ENCODE measurements at regions of chr9 and their contacts with region 1.

Region 1: DNA sequence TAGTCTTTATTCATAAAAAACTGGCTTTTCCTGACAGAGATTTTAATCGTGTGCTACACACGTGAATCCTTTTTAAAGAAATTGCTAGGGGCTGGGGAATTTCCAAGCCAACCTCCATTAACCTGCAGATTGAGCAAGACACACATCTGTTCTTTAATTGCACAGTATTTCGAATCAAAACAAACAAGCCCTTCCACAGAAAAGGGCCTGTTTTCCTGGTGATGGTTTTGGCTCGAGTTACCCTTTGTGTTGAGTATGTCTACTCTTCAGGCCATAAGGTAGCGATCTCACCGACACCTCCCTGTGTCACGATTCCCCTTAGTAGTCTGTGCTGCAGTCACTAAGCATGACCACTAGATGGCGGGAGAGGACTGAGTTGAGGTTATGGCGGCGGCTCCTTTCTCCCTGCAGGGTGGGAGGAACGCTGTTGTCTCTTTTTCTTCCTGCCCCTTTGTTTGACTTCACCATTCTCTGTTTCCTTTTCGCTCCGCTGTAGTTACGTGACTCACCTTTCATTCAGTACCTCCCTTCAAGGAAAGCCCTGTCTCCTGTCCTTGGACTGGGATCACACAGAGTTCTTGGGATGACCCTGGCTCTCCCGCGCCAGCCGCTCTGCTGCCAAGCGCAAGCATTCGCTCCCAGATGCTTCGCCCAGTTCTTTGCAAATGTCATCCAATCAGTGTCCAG is 137.1 kb upstream of the SLC24A2 start:
- DNase-seq: peak; percentile 80
- CTCF ChIP-seq: peak; percentile 90

Region 2: DNA sequence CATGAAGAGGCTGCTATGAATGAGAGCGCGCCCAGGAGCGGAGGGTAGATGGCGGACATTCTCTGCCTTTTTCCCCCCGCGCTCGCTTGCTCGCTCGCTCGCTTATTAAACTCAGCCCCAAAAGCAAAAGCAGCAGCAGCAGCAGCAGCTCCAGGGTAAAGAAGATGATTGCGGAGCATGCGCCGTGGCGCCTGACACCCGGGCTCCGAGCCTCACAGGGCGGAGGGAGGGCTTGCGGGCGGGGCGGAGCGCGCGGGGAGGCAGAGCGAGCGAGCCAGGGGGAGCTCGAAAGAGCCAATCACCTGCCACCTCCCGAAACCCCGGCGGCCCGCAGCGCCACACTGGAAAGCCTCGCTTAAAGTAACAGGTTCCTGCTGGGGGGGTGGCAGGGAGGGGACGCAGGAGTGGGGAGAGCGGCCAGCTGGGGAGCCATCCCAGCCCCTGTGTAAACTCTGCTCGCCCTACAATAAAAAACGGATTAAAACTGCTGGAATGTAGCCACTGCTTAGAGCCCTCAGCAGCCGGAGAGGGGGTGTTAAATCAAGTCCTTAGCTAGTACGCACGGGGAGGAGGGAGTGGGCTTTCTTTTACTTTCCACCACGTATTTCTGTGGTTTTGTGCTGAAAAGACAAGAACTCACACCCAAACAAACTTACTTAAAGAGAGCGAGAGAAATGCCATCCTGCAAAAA is 696.5 kb after region 1 on chr9 and contains the start of gene MLLT3:
- in situ Hi-C with region 1: loop called (anchors 10 kb)
- DNase-seq: peak; percentile 96
- CTCF ChIP-seq: no peak

Region 3: GRCh38 chr9:20941174-20941690 is 1015.3 kb after region 1 on chr9:
- in situ Hi-C with region 1: loop called (anchors 25 kb)
- DNase-seq: peak; percentile 57
- CTCF ChIP-seq: peak; percentile 82

Region 4: GRCh38 chr9:21110708-21111576 is 1185.0 kb after region 1 on chr9:
- in situ Hi-C with region 1: loop called (anchors 25 kb)
- DNase-seq: peak; percentile 60
- CTCF ChIP-seq: peak; percentile 59